Mammary epithelial cell (primary cell): ENCODE measurements at regions of chrX and their contacts with region 1.

Region 1: GRCh38 chrX:120790118-120790517 is 85.5 kb downstream of the CT47B1 start:
- DNase-seq: peak; percentile 55
- H3K4me3 ChIP-seq: no peak overlapping the region
- H3K27ac ChIP-seq: no peak overlapping the region
- H3K4me1 ChIP-seq: peaks cover 2% of the 10 kb centered on the region
- H3K27me3 ChIP-seq: no peaks in the 10 kb centered on the region
- CTCF ChIP-seq: peak; percentile 74 to 84

Region 2: GRCh38 chrX:120585702-120586101 is 204.4 kb before region 1 on chrX:
- CTCF ChIA-PET with region 1: no interaction called
- dilution Hi-C with region 1: no loop called
- in situ Hi-C with region 1: no loop called
- intact Hi-C with region 1: no loop called
- DNase-seq: no peak
- H3K4me3 ChIP-seq: no peak overlapping the region
- H3K27ac ChIP-seq: no peak overlapping the region
- H3K4me1 ChIP-seq: no peaks in the 10 kb centered on the region
- H3K27me3 ChIP-seq: no peaks in the 10 kb centered on the region
- CTCF ChIP-seq: no peak

Region 3: DNA sequence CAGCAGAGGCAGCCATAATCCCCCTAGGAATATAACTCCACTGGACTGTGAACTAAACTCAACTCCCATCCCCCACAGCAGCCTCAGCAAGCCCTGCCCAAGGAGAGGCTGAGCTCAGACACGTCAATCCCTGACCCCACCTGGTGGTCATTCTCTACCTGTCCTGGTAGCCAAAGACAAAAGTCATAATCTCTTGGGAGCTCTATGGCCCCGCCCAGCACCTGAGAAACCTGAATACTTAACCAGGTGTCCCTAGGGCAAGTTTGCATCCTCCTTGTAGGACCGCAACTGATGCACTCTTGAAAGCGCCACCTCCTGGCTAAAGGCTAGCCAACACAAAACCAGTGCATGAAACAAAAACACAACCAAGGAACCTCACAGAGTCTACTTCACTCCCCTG is 67.1 kb after region 1 on chrX:
- CTCF ChIA-PET with region 1: interaction called, 6 read pairs
- dilution Hi-C with region 1: no loop called
- in situ Hi-C with region 1: no loop called
- intact Hi-C with region 1: loop called (anchors 1 kb)
- DNase-seq: no peak
- H3K4me3 ChIP-seq: no peak overlapping the region
- H3K27ac ChIP-seq: no peak overlapping the region
- H3K4me1 ChIP-seq: no peaks in the 10 kb centered on the region
- H3K27me3 ChIP-seq: peaks cover 2% of the 10 kb centered on the region
- CTCF ChIP-seq: no peak

Region 4: DNA sequence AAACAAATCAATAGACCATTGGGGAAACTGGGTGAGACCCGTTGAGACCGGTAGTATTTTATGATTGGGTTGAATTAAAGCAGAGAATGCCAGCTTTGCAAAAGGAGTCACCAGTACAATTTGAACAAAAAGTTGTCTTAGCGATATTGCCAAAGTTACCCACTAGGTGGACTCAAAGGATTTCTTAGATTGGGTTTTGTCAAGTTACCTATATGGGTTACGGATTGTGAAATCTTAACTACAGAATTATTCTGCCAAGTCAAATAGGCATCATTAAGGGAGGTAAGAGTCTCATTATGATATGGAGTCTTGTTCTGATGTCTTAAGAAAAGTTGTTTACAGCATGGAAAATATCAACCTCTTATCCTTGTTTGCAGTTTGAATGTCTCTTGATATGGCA is 210.5 kb after region 1 on chrX:
- CTCF ChIA-PET with region 1: interaction called, 4 read pairs
- dilution Hi-C with region 1: no loop called
- in situ Hi-C with region 1: no loop called
- intact Hi-C with region 1: loop called (anchors 1 kb)
- DNase-seq: peak; percentile 33
- H3K4me3 ChIP-seq: no peak overlapping the region
- H3K27ac ChIP-seq: no peak overlapping the region
- H3K4me1 ChIP-seq: no peaks in the 10 kb centered on the region
- H3K27me3 ChIP-seq: no peaks in the 10 kb centered on the region
- CTCF ChIP-seq: peak; percentile 25 to 61

Region 5: GRCh38 chrX:121308276-121308805 is 518.2 kb after region 1 on chrX:
- CTCF ChIA-PET with region 1: no interaction called
- dilution Hi-C with region 1: no loop called
- in situ Hi-C with region 1: no loop called
- intact Hi-C with region 1: loop called (anchors 10 kb)
- DNase-seq: peak; percentile 67
- H3K4me3 ChIP-seq: no peak overlapping the region
- H3K27ac ChIP-seq: no peak overlapping the region
- H3K4me1 ChIP-seq: no peaks in the 10 kb centered on the region
- H3K27me3 ChIP-seq: no peaks in the 10 kb centered on the region
- CTCF ChIP-seq: peak; percentile 38 to 60

Region 6: DNA sequence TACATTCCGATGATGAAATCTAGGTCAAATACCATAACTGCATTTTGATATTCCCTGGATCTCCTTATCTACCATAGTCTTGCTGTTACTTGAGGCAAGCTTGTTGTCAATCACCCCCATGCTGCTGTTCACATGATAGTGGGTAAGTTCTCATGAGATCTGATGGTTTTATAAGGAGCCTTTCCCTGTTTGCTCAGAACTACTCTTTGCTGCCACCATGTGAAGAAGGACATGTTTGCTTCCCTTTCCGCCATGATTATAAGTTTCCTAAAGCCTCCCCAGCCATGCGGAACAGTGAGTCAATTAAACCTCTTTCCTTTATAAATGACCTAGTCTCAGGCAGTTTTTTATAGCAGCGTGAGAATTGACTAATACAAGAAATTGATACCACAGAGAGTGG is 689.3 kb after region 1 on chrX:
- CTCF ChIA-PET with region 1: no interaction called
- dilution Hi-C with region 1: no loop called
- in situ Hi-C with region 1: no loop called
- intact Hi-C with region 1: loop called (anchors 5 kb)
- DNase-seq: no peak
- H3K4me3 ChIP-seq: no peak overlapping the region
- H3K27ac ChIP-seq: no peak overlapping the region
- H3K4me1 ChIP-seq: no peaks in the 10 kb centered on the region
- H3K27me3 ChIP-seq: no peaks in the 10 kb centered on the region
- CTCF ChIP-seq: peak in 1 of 2 donors; percentile 35

Region 7: GRCh38 chrX:121579016-121579760 is 789.1 kb after region 1 on chrX:
- CTCF ChIA-PET with region 1: interaction called, 8 read pairs
- dilution Hi-C with region 1: no loop called
- in situ Hi-C with region 1: no loop called
- intact Hi-C with region 1: loop called (anchors 1 kb)
- DNase-seq: peak; percentile 12
- H3K4me3 ChIP-seq: no peak overlapping the region
- H3K27ac ChIP-seq: no peak overlapping the region
- H3K4me1 ChIP-seq: no peaks in the 10 kb centered on the region
- H3K27me3 ChIP-seq: no peaks in the 10 kb centered on the region
- CTCF ChIP-seq: peak; percentile 34 to 57